K562 (cell line): ENCODE measurements at regions of chr2 and their contacts with region 1.

Region 1: GRCh38 chr2:66574701-66575624 is 140.0 kb downstream of the MEIS1 start:
- DNase-seq: peak; percentile 50 to 84 (median 67)
- ATAC-seq: peak; percentile 88
- H3K4me3 ChIP-seq: peak overlapping the region; percentile 34
- H3K27ac ChIP-seq: no peak overlapping the region
- H3K4me1 ChIP-seq: peaks cover 2 to 26% of the 10 kb centered on the region in 2 experiments; a peak in 4 of 5 replicates
- H3K27me3 ChIP-seq: peaks cover 26 to 31% of the 10 kb centered on the region in 2 experiments; a peak in 4 of 5 replicates
- CTCF ChIP-seq: peak; percentile 67 to 73 (median 71)
- EP300 ChIP-seq: no peak
- POLR2A ChIP-seq: no peak
- RAD21 ChIP-seq: peak; percentile 83 to 94

Region 2: DNA sequence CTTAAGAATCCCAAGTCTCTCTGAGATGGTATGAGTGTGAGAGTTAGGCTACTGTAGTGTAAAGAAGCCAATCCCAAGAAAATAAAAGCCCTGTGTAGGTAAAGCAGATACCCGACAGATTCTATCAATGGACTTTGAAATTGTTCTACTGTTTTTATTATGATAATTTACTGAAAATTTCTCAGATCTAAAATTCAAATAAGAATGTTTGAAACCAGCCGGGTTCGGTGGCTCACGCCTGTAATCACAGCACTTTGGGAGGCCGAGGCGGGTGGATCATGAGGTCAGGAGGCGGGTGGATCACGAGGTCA is 934.2 kb before region 1 on chr2:
- CTCF ChIA-PET with region 1: no interaction called
- POLR2A ChIA-PET with region 1: no interaction called
- in situ Hi-C with region 1: no loop called
- intact Hi-C with region 1: loop called (anchors 5 kb)
- DNase-seq: no peak
- ATAC-seq: no peak
- H3K4me3 ChIP-seq: no peak overlapping the region
- H3K27ac ChIP-seq: no peak overlapping the region
- H3K4me1 ChIP-seq: no peaks in the 10 kb centered on the region
- H3K27me3 ChIP-seq: peaks cover 9 to 10% of the 10 kb centered on the region in 2 experiments; a peak in 4 of 5 replicates
- CTCF ChIP-seq: no peak
- EP300 ChIP-seq: no peak
- POLR2A ChIP-seq: no peak
- RAD21 ChIP-seq: no peak

Region 3: GRCh38 chr2:65722028-65722778 is 852.8 kb before region 1 on chr2:
- CTCF ChIA-PET with region 1: no interaction called
- POLR2A ChIA-PET with region 1: no interaction called
- in situ Hi-C with region 1: no loop called
- intact Hi-C with region 1: loop called (anchors 10 kb)
- DNase-seq: peak in 2 of 4 experiments; percentile 36 to 62
- ATAC-seq: peak; percentile 95
- H3K4me3 ChIP-seq: no peak overlapping the region
- H3K27ac ChIP-seq: no peak overlapping the region
- H3K4me1 ChIP-seq: no peaks in the 10 kb centered on the region
- H3K27me3 ChIP-seq: peaks cover 0 to 2% of the 10 kb centered on the region in 2 experiments; a peak in 3 of 5 replicates
- CTCF ChIP-seq: peak; percentile 52 to 75 (median 64)
- EP300 ChIP-seq: no peak
- POLR2A ChIP-seq: no peak
- RAD21 ChIP-seq: peak; percentile 85 to 93

Region 4: DNA sequence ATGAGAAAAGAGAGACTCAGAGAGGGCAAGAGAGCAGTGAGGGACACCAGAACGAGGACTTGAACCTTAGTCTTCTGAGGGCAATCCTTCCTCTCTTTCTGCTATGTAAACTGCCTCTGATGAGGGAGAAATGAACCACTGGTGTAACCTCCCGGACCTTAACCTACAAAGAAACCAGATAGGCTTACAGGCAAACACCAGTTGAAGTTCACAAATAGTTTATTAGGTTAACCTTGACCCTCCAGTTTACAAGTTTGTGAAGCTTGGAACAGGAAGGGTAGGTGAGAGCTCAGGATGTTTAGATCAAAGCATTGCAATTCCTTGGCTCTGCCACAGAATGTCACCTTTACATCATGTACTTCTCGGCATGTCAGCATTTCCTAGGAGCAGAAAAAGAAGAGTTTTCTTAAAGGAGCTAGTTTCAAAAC is 656.2 kb before region 1 on chr2:
- CTCF ChIA-PET with region 1: no interaction called
- POLR2A ChIA-PET with region 1: no interaction called
- in situ Hi-C with region 1: no loop called
- intact Hi-C with region 1: loop called (anchors 10 kb)
- DNase-seq: peak in 1 of 4 experiments; percentile 10
- ATAC-seq: peak; percentile 53; the same call in 2 of the 3 replicates
- H3K4me3 ChIP-seq: no peak overlapping the region
- H3K27ac ChIP-seq: no peak overlapping the region
- H3K4me1 ChIP-seq: peaks cover 5 to 11% of the 10 kb centered on the region in 2 experiments; a peak in 3 of 5 replicates
- H3K27me3 ChIP-seq: no peaks in the 10 kb centered on the region
- CTCF ChIP-seq: peak in 2 of 3 experiments; percentile 20 to 47; a peak in 2 of 6 replicates
- EP300 ChIP-seq: no peak
- POLR2A ChIP-seq: no peak
- RAD21 ChIP-seq: peak; percentile 51 to 67

Region 5: DNA sequence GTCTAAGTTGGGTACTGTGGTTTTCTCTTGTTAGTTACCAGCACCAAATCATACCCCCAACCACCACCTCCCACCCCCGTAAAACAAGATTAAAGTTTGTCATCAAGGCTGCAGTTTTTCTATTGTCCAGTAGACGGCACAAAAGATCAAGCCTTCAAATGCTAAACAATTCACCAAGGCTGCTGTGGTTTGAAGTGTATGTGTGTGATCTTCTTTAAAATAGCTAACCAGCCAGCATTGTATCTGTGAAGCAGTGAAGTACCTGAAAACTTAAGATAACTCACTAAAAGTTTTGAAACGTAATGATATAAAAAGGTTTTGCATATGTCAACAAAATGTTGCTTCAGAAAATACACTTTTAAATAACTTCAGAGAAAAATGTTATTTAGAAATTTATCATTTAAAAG is 145.9 kb before region 1 on chr2:
- CTCF ChIA-PET with region 1: interaction called, 22 read pairs
- POLR2A ChIA-PET with region 1: interaction called, 3 read pairs
- in situ Hi-C with region 1: loop called (anchors 5 kb)
- intact Hi-C with region 1: loop called (anchors 1 kb)
- DNase-seq: peak; percentile 36 to 73 (median 45)
- ATAC-seq: peak; percentile 27; the same call in 2 of the 3 replicates
- H3K4me3 ChIP-seq: no peak overlapping the region
- H3K27ac ChIP-seq: no peak overlapping the region
- H3K4me1 ChIP-seq: peaks cover 0 to 30% of the 10 kb centered on the region in 2 experiments; a peak in 3 of 5 replicates
- H3K27me3 ChIP-seq: peaks cover 13 to 23% of the 10 kb centered on the region in 2 experiments; a peak in 4 of 5 replicates
- CTCF ChIP-seq: peak; percentile 77 to 90 (median 79)
- EP300 ChIP-seq: no peak
- POLR2A ChIP-seq: no peak
- RAD21 ChIP-seq: peak; percentile 97 to 98

Region 6: DNA sequence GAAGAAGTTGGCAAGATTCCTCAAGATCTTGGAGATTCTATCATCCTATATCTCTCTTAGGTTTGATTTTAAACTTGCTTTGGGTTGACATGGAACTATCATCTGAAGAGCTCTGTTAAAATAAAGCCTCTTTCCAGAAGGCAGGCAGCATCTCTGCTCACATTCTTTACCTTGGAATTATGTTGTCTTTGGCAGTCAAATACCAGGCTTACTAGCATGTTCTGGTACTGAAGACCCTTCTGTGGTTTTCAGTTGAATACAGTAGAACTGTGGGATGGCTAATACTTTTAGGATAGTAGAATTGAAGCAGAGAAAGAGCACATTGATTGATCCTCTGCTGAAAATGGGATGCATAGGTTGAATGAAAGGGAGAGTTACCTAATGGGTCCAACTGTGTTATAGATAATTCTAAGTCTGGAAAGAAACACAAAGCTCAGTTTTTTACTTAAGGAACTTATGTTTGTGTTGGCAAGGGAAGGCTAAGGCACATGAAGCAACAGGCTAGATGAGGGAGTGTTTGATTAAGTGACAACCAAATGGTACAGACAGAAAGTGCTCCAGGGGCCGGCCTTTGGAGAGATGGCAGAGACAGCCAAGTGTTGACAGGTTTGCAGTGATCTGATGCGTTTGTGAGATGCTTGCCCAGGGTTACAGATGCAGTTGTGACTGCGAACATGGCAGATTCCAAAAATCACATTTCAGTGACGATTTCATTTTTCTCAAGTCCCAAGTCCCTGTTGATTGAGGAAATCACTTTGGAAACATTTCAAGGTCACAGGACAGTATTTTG is 257.9 kb after region 1 on chr2:
- CTCF ChIA-PET with region 1: no interaction called
- POLR2A ChIA-PET with region 1: no interaction called
- in situ Hi-C with region 1: no loop called
- intact Hi-C with region 1: no loop called
- DNase-seq: no peak
- ATAC-seq: no peak
- H3K4me3 ChIP-seq: no peak overlapping the region
- H3K27ac ChIP-seq: no peak overlapping the region
- H3K4me1 ChIP-seq: no peaks in the 10 kb centered on the region
- H3K27me3 ChIP-seq: no peaks in the 10 kb centered on the region
- CTCF ChIP-seq: no peak
- EP300 ChIP-seq: no peak
- POLR2A ChIP-seq: no peak
- RAD21 ChIP-seq: no peak

Region 7: DNA sequence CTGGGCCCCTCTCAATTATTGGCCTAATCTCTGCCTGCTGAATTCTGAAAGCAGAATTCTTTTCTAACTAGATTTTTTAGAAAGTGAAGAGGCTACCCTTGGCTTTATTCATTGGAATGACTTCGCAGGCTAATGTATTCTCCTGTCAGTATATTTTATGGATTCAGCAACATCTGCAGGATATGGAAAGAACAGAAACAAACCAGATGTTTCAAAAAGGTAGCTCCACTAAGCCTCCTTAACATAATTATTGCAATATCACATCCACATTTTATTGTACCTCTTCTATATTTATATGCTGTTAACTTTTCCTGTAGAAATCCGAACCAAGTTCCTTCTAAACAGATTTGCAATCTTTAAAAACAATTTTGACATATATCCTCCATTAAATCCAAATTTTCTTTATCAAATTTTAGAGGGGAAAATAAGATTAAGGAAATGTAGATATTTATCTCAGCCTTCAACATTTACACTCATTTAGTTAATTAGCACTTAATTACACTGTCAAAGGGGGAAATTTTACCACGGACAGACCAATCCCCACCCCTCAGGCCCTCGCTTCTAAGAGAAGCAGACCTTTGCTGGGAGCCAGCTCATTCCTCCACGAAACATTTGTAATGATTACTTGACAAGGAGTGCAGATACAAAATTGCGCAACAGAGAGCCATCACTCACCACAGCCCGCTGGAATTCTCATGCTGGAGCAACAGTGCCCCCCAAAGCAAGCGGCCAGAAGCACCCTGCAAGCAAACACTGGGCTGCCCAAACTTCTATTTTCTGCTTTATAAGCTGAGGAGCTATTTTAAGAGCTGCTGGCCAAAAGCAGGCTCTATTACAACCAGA is 1075.5 kb after region 1 on chr2:
- CTCF ChIA-PET with region 1: no interaction called
- POLR2A ChIA-PET with region 1: no interaction called
- in situ Hi-C with region 1: no loop called
- intact Hi-C with region 1: loop called (anchors 10 kb)
- DNase-seq: peak; percentile 13 to 37 (median 24)
- ATAC-seq: peak; percentile 65
- H3K4me3 ChIP-seq: no peak overlapping the region
- H3K27ac ChIP-seq: no peak overlapping the region
- H3K4me1 ChIP-seq: no peaks in the 10 kb centered on the region
- H3K27me3 ChIP-seq: no peaks in the 10 kb centered on the region
- CTCF ChIP-seq: peak; percentile 39 to 49 (median 47); a peak in 5 of 6 replicates
- EP300 ChIP-seq: no peak
- POLR2A ChIP-seq: no peak
- RAD21 ChIP-seq: peak; percentile 34 to 49; a peak in 3 of 4 replicates

Region 8: GRCh38 chr2:68031542-68032160 is 1456.7 kb after region 1 on chr2:
- CTCF ChIA-PET with region 1: no interaction called
- POLR2A ChIA-PET with region 1: no interaction called
- in situ Hi-C with region 1: no loop called
- intact Hi-C with region 1: loop called (anchors 5 kb)
- DNase-seq: peak; percentile 38 to 64 (median 42)
- ATAC-seq: peak; percentile 87
- H3K4me3 ChIP-seq: no peak overlapping the region
- H3K27ac ChIP-seq: no peak overlapping the region
- H3K4me1 ChIP-seq: no peaks in the 10 kb centered on the region; a peak in 1 of 5 replicates
- H3K27me3 ChIP-seq: no peaks in the 10 kb centered on the region
- CTCF ChIP-seq: peak; percentile 43 to 81 (median 51); a peak in 4 of 6 replicates
- EP300 ChIP-seq: no peak
- POLR2A ChIP-seq: no peak
- RAD21 ChIP-seq: peak; percentile 91 to 92